CD8-positive, alpha-beta T cell (primary cell): ENCODE measurements at regions of chr4 and their contacts with region 1.

Region 1: DNA sequence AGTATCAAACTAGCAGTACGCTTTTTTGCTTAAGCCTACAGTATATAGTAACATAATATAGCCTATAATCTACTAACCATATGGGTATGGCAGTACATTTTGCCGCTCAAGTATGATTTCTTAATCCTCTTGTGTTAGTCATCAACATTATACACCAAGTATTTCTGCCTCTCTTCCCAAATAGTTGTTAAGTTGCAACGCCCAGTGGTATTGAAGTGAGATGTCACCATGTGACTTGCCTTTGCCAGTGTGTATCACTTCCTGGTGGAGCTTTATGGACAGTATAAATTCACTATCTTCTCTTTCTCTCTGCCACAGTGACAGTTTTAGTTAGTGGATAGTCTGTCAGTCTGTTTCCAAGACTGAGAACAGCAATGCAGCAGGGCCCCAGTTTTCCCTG is 535.5 kb downstream of the PDHA2 start:
- DNase-seq: no peak
- ATAC-seq: no peak
- H3K4me3 ChIP-seq: no peak overlapping the region
- H3K4me3 Mint-ChIP-seq: no peak overlapping the region
- H3K27ac ChIP-seq: no peak overlapping the region
- H3K27ac Mint-ChIP-seq: no peak overlapping the region
- H3K4me1 ChIP-seq: no peaks in the 10 kb centered on the region
- H3K4me1 Mint-ChIP-seq: no peaks in the 10 kb centered on the region
- H3K27me3 ChIP-seq: no peaks in the 10 kb centered on the region
- H3K27me3 Mint-ChIP-seq: no peaks in the 10 kb centered on the region
- CTCF ChIP-seq: no peak

Region 2: DNA sequence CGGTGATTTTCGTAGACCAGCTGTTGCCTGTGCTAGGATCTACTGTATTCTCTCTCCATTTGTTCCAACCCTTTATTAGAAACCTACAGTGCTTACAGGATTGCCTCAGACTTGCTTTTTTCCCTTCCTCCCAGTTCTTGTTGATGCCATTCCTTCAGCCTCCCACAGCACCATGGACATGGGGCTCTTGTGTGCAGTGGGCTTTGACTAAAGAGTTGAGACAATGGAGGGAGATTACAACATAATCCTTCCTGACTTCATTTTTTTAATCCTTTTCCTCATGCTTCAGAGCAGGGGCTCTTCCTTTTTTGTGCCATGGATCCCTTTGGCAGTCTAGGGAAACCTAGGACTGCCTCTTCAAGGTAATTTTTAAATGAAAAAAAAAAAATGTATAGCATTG is 1525.5 kb before region 1 on chr4:
- CTCF ChIA-PET with region 1: no interaction called
- POLR2A ChIA-PET with region 1: no interaction called
- intact Hi-C with region 1: loop called in 1 of 2 experiments (anchors 5 kb)
- DNase-seq: no peak
- ATAC-seq: no peak
- H3K4me3 ChIP-seq: no peak overlapping the region
- H3K4me3 Mint-ChIP-seq: no peak overlapping the region
- H3K27ac ChIP-seq: no peak overlapping the region
- H3K27ac Mint-ChIP-seq: no peak overlapping the region
- H3K4me1 ChIP-seq: no peaks in the 10 kb centered on the region
- H3K4me1 Mint-ChIP-seq: no peaks in the 10 kb centered on the region
- H3K27me3 ChIP-seq: no peaks in the 10 kb centered on the region
- H3K27me3 Mint-ChIP-seq: peaks cover 3% of the 10 kb centered on the region
- CTCF ChIP-seq: no peak